GM13977 (cell line): ENCODE measurements at regions of chr11 and their contacts with region 1.

Region 1: DNA sequence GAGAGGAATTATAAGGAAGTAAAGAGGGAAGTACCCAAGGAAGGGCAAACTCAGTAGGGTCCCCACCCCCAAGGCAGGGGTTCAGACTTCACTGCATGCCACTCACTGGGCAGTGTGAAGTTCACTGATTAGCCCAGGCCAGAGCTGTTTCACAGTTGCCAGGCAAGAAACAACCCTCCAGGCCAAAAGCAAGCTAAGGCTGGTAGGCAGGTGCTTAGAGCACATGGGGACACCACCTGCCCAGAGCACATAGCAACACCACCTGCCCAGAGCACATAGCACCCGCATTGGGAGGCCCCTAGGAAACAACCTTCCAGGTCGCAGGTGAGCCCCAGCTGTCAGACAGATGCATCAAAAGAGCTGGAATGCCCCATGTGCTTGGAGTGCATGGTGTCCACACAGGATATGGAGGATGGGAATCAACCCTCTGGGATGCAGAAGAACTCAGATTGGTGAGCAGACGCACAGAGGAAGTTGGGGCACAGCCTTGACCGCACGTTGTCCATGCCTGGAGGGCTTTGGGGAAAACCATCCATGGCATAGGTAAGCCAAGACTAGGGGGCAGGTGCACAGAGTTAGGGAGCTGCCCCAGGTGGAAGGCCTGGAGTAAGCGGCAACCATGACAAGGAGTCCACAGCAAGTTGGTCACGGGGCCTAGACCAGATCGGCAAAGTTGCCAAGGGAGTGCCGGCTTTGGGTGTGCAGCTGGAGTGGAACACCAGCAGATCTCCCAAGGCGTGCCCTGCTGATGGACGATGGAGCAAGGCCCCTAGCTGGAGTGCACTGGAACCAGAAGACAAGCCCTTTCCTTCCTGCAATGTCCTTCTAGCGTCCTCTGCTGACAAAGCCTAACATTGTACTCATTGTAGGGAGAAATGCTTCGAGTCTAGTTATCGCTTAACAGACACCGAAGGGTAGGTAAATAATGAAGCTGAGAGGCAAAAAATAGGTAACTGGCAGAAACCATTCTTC is 7.8 kb upstream of the TMEM216 start:
- DNase-seq: peak; percentile 34
- CTCF ChIP-seq: peak; percentile 42

Region 2: DNA sequence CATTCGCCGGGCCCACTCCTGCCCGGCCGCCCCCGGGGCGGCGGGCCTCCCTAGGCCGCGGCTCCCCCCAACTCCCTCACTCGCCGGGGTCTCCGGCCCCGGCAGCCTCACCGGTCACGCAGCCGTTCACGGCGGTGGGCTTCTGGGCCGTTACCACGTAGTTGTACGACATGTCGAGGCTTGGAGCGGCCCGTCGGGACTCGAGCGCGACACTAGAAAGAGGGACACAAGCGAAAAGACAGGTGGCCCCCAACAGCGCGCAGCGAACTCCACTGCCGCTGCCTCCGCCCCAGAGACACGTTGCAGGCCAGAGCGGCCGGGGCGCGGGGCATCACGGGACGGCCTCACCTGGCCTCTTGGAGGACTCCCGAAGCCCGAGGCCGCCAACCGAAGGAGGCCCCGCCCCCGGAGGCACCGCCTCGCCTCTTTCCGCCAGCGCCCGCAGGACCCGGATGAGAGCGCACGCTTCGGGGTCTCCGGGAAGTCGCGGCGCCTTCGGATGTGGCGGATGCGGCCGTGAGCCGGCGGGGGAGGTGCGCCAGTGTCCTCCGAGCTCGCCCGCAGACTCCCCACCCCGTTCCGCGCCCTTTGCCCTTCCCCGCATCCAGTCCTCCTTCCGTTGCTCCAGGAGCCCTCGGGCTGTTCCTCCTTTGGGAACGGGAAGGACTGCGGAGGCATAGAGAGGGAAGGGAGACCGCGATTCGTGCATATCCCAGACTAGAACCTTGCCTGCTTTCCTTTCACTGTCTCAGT is 51.6 kb before region 1 on chr11 and contains the starts of genes DDB1 and TKFC:
- in situ Hi-C with region 1: loop called (anchors 10 kb)
- DNase-seq: peak; percentile 99
- CTCF ChIP-seq: no peak